ENCODE measurements at regions of chr2 and their contacts with region 1.

Region 1: GRCh38 chr2:119678998-119679710 is at the start of gene TMEM177:
- DNase-seq: peak; percentile 90
- H3K4me3 Mint-ChIP-seq: peak within 1 kb of the TSS; percentile 96
- H3K27ac Mint-ChIP-seq: peak within 1 kb of the TSS; percentile 85
- H3K4me1 Mint-ChIP-seq: peaks cover 25% of the 10 kb centered on the region
- H3K27me3 Mint-ChIP-seq: peaks cover 4% of the 10 kb centered on the region
- total RNA-seq, gene TMEM177: 16.6 and 17.4 TPM in 2 replicates

Region 2: DNA sequence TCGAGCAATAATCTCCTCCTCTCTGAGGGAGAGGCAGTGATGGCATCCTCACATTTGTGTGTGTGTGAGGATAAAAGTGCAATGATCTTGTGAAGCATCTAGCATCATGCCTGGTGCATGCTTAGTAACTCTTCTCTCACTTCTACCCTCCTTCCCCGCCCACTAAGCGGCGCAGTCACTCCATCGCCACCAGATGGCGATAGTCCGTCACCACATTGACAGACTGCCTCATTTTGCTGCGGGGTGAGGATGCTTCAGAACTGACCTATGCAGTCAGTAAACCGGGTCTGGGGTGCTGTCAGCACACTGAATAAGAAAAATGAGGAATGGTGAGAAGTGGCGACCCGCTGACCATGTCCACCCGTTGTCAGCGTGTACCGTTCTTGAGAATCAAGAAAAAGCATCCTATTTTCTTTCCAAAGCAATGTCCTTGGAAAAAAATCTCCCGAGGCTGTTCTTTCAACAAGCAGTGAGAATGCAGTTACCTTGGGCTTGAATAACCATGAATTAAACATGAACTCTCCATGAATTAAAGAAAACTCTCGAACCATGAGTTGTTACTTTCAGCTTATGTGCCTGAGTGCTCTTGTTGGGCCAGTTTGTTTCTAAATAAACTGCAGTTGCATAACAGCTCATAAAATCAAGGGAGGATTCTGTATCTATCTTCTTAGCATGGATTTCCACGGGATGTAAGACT is 37.4 kb before region 1 on chr2:
- intact Hi-C with region 1: loop called (anchors 1 kb)
- DNase-seq: peak; percentile 60
- H3K4me3 Mint-ChIP-seq: no peak overlapping the region
- H3K27ac Mint-ChIP-seq: no peak overlapping the region
- H3K4me1 Mint-ChIP-seq: peaks cover 7% of the 10 kb centered on the region
- H3K27me3 Mint-ChIP-seq: peaks cover 6% of the 10 kb centered on the region

Region 3: DNA sequence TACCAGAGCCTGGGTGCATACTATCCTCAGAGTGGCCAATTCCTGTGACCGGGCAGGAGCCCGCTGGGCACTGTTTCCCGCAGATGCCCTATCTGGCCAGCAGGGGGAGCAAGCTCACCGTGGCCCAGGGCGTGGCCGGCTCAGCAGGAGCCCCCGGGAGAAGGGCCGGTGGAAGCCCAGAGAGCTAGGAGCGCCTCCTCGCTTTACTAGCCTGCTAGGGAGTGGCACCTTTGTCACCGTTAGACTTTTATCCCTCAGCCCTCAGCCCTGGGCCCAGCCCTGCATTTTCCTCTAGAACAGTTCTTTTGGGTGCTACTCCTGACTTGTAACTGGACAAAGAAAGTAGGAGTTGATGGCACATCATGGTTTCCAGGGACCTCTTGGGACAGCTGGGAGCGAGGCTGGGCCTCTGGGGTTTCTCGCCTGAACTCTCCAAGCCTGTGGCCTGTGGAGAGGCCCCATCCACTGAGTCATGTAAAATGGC is 23.8 kb after region 1 on chr2:
- intact Hi-C with region 1: loop called (anchors 1 kb)
- DNase-seq: peak; percentile 56
- H3K4me3 Mint-ChIP-seq: no peak overlapping the region
- H3K27ac Mint-ChIP-seq: no peak overlapping the region
- H3K4me1 Mint-ChIP-seq: peaks cover 3% of the 10 kb centered on the region
- H3K27me3 Mint-ChIP-seq: peaks cover 2% of the 10 kb centered on the region

Region 4: GRCh38 chr2:120223034-120223912 is 544.1 kb after region 1 on chr2 and contains the start of gene TMEM185B:
- intact Hi-C with region 1: loop called (anchors 1 kb)
- DNase-seq: peak; percentile 90
- H3K4me3 Mint-ChIP-seq: peak within 1 kb of the TSS; percentile 86
- H3K27ac Mint-ChIP-seq: peak within 1 kb of the TSS; percentile 92
- H3K4me1 Mint-ChIP-seq: peaks cover 69% of the 10 kb centered on the region
- H3K27me3 Mint-ChIP-seq: peaks cover 2% of the 10 kb centered on the region
- total RNA-seq, gene TMEM185B: 47.9 and 48.6 TPM in 2 replicates